ENCODE measurements at regions of chr20 and their contacts with region 1.

Region 1: GRCh38 chr20:45934586-45935415 is at the start of gene PCIF1:
- DNase-seq: peak; percentile 97 to 99
- H3K4me3 ChIP-seq: peak within 1 kb of the TSS; percentile 72 to 90
- H3K27ac ChIP-seq: peak within 1 kb of the TSS; percentile 98 to 99
- H3K4me1 ChIP-seq: peaks cover 0 to 26% (median 16%) of the 10 kb centered on the region in 4 donors
- H3K27me3 ChIP-seq: no peaks in the 10 kb centered on the region
- CTCF ChIP-seq: no peak

Region 2: DNA sequence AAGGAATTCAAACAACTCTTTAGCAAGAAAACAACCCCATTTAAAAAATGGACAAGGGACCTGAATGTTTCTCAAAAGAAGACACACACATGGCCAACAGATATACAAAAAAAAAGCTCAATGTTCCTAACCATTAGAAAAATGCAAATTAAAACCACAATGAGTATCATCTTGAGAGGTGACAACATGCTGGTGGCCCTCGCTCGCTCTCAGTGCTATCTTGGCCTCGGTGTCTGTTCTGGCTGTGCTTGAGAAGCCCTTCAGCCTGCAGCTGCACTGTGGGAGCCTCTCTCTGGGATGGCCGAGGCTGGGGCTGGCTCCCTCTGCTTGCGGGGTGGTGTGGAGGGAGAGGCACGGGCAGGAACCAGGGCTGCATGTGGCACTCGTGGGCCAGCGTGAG is 199.2 kb before region 1 on chr20:
- intact Hi-C with region 1: no loop called
- DNase-seq: no peak
- H3K4me3 ChIP-seq: no peak overlapping the region
- H3K27ac ChIP-seq: no peak overlapping the region
- H3K4me1 ChIP-seq: no peaks in the 10 kb centered on the region
- H3K27me3 ChIP-seq: no peaks in the 10 kb centered on the region
- CTCF ChIP-seq: no peak

Region 3: GRCh38 chr20:45792332-45792686 is 142.5 kb before region 1 on chr20:
- intact Hi-C with region 1: loop called (anchors 1 kb)
- DNase-seq: no peak
- H3K4me3 ChIP-seq: peak overlapping the region; percentile 73 to 88
- H3K27ac ChIP-seq: peak overlapping the region; percentile 83 to 93
- H3K4me1 ChIP-seq: peaks cover 0 to 22% (median 11%) of the 10 kb centered on the region in 4 donors
- H3K27me3 ChIP-seq: no peaks in the 10 kb centered on the region
- CTCF ChIP-seq: no peak

Region 4: DNA sequence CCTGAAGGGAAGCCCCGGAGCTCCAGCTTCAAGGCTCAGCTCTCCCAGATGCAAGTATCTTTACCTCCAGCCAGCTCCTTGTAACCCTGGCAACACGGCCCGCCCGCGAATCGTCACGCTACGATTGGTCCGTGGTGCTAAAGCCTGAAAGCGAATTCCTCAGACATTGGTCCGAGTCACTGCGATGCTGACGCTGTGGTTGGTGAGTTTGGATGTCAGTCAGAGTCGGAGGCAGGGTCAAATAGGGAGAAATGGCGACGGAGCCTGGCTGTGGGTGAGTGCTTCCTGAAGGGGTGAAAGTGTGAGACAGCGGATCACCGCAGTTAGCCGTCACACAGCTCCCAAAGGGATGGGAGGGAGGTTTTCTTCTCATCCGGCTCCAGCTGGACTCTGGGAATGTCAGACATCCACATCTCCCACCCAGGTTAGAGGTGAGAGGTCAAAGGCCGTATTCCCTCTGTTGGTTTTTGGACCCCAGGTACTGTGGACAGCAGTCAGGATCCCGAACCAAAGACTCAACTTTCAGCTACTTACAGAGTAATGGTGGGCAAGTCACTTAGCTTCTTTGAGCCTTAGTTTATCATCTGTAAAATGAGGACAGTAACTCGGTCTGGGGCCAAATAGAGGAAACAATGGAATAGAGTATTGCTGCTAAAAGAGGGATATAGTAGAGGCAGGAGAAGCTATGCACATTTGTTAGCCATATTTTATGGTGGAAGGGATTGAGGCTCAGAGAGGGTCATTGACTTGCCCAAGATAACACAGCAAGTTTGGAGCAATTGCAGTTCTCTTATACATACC is 53.6 kb before region 1 on chr20 and contains the start of gene ZSWIM1:
- intact Hi-C with region 1: no loop called
- DNase-seq: peak; percentile 100
- H3K4me3 ChIP-seq: peak within 1 kb of the TSS; percentile 56 to 67
- H3K27ac ChIP-seq: peak within 1 kb of the TSS; percentile 81 to 83
- H3K4me1 ChIP-seq: peaks cover 0 to 17% (median 13%) of the 10 kb centered on the region in 4 donors
- H3K27me3 ChIP-seq: no peaks in the 10 kb centered on the region
- CTCF ChIP-seq: peak in 1 of 2 experiments; percentile 19

Region 5: GRCh38 chr20:45890985-45891983 is 43.5 kb before region 1 on chr20 and contains the starts of genes CTSA and NEURL2:
- intact Hi-C with region 1: loop called (anchors 5 kb)
- DNase-seq: peak; percentile 94 to 96
- H3K4me3 ChIP-seq: peak within 1 kb of the TSS; percentile 58 to 82
- H3K27ac ChIP-seq: peak within 1 kb of the TSS; percentile 79 to 89
- H3K4me1 ChIP-seq: peaks cover 0 to 33% (median 24%) of the 10 kb centered on the region in 4 donors
- H3K27me3 ChIP-seq: no peaks in the 10 kb centered on the region
- CTCF ChIP-seq: peak in 1 of 2 experiments; percentile 10

Region 6: GRCh38 chr20:45971675-45972499 is 37.1 kb after region 1 on chr20 and contains the start of gene ZNF335:
- intact Hi-C with region 1: loop called (anchors 5 kb)
- DNase-seq: peak; percentile 92 to 97
- H3K4me3 ChIP-seq: peak within 1 kb of the TSS; percentile 69 to 75
- H3K27ac ChIP-seq: peak within 1 kb of the TSS; percentile 98 to 100
- H3K4me1 ChIP-seq: peaks cover 4 to 34% (median 18%) of the 10 kb centered on the region in 4 donors
- H3K27me3 ChIP-seq: no peaks in the 10 kb centered on the region
- CTCF ChIP-seq: peak; percentile 46 to 58

Region 7: GRCh38 chr20:47379433-47380150 is 1444.8 kb after region 1 on chr20:
- intact Hi-C with region 1: loop called (anchors 5 kb)
- DNase-seq: no peak
- H3K4me3 ChIP-seq: no peak overlapping the region
- H3K27ac ChIP-seq: no peak overlapping the region
- H3K4me1 ChIP-seq: peaks cover 0 to 12% (median 7%) of the 10 kb centered on the region in 4 donors
- H3K27me3 ChIP-seq: no peaks in the 10 kb centered on the region
- CTCF ChIP-seq: no peak